Activated naive CD4-positive, alpha-beta T cell treated with anti-CD3 and anti-CD28 coated beads for 36 hours (primary cell): ENCODE measurements at regions of chr2 and their contacts with region 1.

Region 1: GRCh38 chr2:231780909-231781797 is at the start of gene PDE6D:
- DNase-seq: peak; percentile 98
- H3K4me3 Mint-ChIP-seq: peak within 1 kb of the TSS; percentile 92
- H3K27ac Mint-ChIP-seq: peak within 1 kb of the TSS; percentile 96
- H3K4me1 Mint-ChIP-seq: peaks cover 47% of the 10 kb centered on the region
- H3K27me3 Mint-ChIP-seq: no peaks in the 10 kb centered on the region
- total RNA-seq, gene PDE6D: 25.6 to 27.1 TPM

Region 2: DNA sequence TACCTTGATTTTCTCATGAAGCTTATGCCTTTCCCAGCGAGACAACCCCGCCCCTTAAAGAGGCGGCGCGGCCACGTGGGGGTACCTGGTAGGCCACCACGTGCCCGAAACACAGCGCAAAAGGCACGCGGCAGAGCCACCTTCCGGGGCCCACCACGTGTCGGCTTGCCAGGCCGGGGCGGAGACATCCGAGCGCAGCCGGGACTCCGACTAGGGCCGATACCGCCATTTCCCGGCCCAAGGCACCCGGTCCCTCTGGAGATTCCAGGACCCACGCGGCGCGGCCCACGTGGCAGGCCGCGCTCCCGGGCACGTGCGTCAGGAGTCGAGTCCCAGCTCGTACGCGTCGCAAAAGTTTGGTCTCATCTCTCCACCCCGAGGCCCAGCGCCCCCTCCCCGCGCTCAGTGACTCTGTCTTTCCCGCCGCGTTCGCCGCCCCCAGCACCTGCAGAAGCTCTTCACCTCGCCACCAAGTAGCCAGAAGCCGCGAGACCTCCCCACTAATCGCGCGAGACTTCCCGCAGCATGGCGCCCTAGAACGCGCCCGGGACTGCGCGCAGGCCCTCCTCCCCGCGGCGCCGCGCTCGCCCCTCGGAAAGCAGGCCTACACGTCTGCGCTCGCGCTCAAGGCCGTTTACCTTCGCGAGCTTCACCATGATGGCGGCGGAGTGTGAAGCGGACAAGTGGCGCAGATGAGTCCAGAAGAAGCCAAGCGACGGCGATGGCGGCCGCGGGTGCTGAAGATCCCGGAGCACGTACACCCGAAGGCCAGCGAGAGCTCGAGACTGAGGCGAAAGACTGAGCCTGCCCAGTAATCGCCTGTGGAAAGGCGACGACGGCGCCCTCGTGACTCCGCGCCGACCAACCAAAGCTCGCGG is 317.2 kb before region 1 on chr2 and contains the start of gene NCL:
- CTCF ChIA-PET with region 1: no interaction called
- intact Hi-C with region 1: loop called (anchors 1 kb)
- DNase-seq: peak; percentile 87
- H3K4me3 Mint-ChIP-seq: peak within 1 kb of the TSS; percentile 97
- H3K27ac Mint-ChIP-seq: peak within 1 kb of the TSS; percentile 98
- H3K4me1 Mint-ChIP-seq: peaks cover 46% of the 10 kb centered on the region
- H3K27me3 Mint-ChIP-seq: no peaks in the 10 kb centered on the region
- total RNA-seq, gene NCL: 908 to 911 TPM

Region 3: GRCh38 chr2:231655897-231656296 is 125.3 kb before region 1 on chr2:
- CTCF ChIA-PET with region 1: no interaction called
- intact Hi-C with region 1: loop called (anchors 2 kb)
- DNase-seq: no peak
- H3K4me3 Mint-ChIP-seq: no peak overlapping the region
- H3K27ac Mint-ChIP-seq: no peak overlapping the region
- H3K4me1 Mint-ChIP-seq: no peaks in the 10 kb centered on the region
- H3K27me3 Mint-ChIP-seq: no peaks in the 10 kb centered on the region

Region 4: DNA sequence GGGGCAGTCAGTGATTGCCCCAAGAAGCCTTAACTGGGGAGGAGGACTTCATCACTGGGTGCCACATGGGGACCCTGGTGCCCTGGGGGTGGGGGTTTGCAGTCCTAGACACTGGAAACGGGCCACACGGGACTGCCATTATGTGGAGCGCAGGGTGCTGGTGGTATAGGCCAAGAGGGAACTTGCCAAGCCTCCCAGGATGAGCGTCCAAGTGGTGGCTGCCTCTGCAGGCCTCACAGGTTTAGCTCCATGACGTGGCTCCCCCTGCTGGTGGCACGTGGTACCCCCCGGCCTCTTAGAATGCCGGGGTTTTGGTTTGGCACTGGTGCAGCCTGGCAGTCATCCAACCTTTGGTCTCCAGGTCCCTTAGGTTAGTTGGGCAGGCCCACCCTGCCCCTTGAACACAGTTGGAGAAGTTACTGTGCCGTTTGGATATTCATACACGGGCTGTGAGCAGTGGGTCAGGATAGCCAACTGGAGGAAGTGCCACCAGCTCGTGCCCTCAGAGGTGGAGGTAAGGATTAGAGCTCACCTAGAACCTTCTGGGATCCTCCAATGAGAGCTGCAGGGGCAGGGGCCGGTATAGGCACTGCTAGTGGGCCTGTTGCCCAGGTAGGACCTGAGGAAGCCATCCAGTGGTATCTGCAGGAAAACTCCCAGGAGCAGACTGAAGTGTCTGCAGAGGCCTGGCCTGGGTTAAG is 67.3 kb before region 1 on chr2:
- CTCF ChIA-PET with region 1: interaction called, 10 read pairs
- intact Hi-C with region 1: no loop called
- DNase-seq: peak; percentile 95
- H3K4me3 Mint-ChIP-seq: peak overlapping the region; percentile 46
- H3K27ac Mint-ChIP-seq: peak overlapping the region; percentile 94
- H3K4me1 Mint-ChIP-seq: peaks cover 27% of the 10 kb centered on the region
- H3K27me3 Mint-ChIP-seq: no peaks in the 10 kb centered on the region

Region 5: GRCh38 chr2:231961349-231962166 is 180.4 kb after region 1 on chr2 and contains the start of gene DIS3L2:
- CTCF ChIA-PET with region 1: no interaction called
- intact Hi-C with region 1: loop called (anchors 1 kb)
- DNase-seq: peak; percentile 82
- H3K4me3 Mint-ChIP-seq: peak within 1 kb of the TSS; percentile 84
- H3K27ac Mint-ChIP-seq: peak within 1 kb of the TSS; percentile 86
- H3K4me1 Mint-ChIP-seq: peaks cover 31% of the 10 kb centered on the region
- H3K27me3 Mint-ChIP-seq: no peaks in the 10 kb centered on the region
- total RNA-seq, gene DIS3L2: 32.4 to 35.3 TPM

Region 6: DNA sequence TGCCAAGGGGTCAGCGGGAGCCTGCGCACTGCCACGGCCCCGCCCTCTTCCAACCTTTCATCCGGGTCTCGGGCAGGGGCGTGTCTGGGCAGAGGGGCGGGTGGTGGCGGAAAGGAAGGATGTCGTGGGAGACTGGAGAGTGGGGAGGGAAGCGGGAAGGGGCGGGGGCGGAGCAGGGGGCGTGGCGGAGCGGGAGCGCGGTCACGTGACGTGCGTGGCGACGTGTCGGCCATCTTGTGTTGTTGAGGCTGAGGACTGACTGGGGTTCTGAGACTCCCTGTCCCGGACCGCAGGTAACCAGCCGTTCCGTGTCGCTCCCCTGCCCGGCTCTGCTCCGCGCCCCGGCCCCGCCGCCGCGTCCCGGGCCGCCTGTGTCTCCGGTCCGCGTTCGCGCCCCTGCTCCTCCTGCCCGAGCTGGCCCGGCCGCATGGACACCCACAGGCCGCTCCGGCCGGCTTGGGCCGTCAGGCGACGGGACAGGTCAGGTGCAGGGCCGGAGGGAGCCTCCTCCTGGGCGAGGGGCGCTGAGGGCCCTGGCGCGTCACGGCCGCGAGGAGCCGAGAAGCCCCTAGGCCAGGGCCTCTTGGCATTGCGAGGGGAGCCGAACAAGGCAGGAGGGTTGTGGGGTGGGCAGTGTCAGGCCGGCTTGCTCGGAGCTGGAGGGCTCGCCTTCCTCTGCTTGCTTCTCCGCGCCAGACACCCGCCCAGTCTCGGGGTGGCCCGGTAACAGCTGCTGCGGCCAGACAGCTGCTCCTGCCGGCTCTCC is 916.1 kb after region 1 on chr2 and contains the start of gene GIGYF2:
- CTCF ChIA-PET with region 1: no interaction called
- intact Hi-C with region 1: loop called (anchors 10 kb)
- DNase-seq: peak; percentile 97
- H3K4me3 Mint-ChIP-seq: peak within 1 kb of the TSS; percentile 87
- H3K27ac Mint-ChIP-seq: peak within 1 kb of the TSS; percentile 70
- H3K4me1 Mint-ChIP-seq: peaks cover 36% of the 10 kb centered on the region
- H3K27me3 Mint-ChIP-seq: no peaks in the 10 kb centered on the region
- total RNA-seq, gene GIGYF2: 49.7 to 52.8 TPM